AG04450 (cell line): ENCODE measurements at regions of chr16 and their contacts with region 1.

Region 1: GRCh38 chr16:30805370-30806169 is 18.6 kb upstream of the ZNF629 start:
- DNase-seq: no peak
- H3K4me3 ChIP-seq: peak overlapping the region; percentile 79
- H3K27ac ChIP-seq: peak overlapping the region; percentile 87
- H3K27me3 ChIP-seq: peaks cover 2% of the 10 kb centered on the region
- CTCF ChIP-seq: peak; percentile 11; the same call in 1 of the 2 replicates

Region 2: DNA sequence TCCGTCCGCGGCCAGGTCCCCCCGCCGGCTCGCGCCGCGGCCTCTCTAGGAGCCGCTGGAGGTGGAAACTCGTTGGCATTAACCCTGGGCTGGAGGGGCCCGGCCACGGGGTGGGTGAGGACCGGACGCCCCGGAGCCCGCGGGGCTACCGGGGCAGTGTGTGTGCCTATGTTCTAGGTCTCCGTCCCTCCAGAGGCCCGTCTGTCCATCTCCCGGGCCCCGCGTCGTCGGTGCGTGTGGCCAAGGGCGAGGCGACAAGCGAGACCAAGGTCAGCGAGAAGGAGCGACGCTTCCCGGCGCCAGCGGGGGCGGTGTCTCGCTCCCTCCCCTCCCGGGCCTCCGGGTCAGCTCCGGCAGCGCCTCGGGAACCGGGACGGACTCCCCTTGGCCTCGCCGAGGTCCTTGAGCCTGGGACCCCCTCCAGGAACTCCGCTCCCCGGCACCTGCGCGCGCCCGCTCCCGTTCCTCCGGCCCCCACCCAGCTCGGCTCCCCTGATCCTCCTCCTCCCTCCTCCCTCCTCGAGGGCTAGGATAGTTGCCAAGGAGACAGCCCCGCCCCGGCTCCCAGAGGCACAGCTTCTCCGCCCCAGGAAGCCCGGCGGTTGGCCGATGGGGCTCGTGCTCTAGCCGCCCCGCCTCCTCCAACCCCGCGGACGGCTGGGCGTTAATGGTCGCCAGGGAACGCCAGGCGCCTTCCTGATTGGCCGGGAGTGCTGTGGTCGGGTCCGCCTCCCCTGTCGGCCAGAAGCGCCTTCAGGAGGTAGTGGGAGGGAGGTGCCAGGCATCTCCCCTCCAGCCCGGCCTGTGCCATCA is 278.5 kb before region 1 on chr16:
- CTCF ChIA-PET with region 1: no interaction called
- POLR2A ChIA-PET with region 1: no interaction called
- DNase-seq: peak; percentile 91
- H3K4me3 ChIP-seq: peak overlapping the region; percentile 81
- H3K27ac ChIP-seq: peak overlapping the region; percentile 65
- H3K27me3 ChIP-seq: no peaks in the 10 kb centered on the region
- CTCF ChIP-seq: peak; percentile 19; the same call in 1 of the 2 replicates

Region 3: DNA sequence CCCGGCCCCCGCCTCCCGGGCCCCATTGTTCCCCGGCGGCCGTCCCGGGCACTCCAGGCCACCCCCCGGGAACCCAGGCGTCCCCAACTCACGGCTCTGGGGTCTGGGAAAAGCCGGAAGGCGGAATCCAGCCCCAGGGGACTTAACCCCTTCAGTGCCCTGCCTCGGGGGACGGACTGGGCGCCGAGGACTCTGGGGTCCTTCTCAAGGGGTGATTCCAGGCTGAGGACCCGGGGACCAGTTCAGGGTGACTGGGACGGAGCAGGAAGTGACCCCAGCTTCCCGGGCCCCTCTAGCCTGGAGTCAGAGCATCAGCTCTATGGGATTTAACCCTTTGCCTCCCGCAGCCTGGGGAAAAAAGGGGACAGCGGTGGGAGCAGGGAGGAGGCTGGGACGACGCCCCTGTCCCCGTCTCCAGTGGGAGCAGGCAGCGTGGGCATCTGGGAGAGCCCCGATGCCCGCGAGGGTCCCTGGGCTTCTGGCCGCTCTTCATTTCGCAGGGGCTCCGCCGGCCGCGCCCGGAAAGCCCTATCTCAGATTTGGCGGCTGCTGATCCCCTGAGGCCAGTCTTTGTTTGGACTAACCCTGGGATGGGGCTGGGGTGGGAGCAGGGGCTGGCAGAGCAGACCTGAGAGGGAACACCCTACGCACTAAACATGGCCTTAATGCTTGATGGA is 18.5 kb before region 1 on chr16 and contains the start of gene ZNF629:
- CTCF ChIA-PET with region 1: interaction called, 3 read pairs
- POLR2A ChIA-PET with region 1: interaction called, 70 read pairs
- DNase-seq: no peak
- H3K4me3 ChIP-seq: peak within 1 kb of the TSS; percentile 90
- H3K27ac ChIP-seq: peak within 1 kb of the TSS; percentile 73
- H3K27me3 ChIP-seq: no peaks in the 10 kb centered on the region
- CTCF ChIP-seq: no peak
- polyA plus RNA-seq, gene ZNF629: 5.1 and 8.0 TPM in 2 replicates

Region 4: GRCh38 chr16:30922960-30923535 is 117.5 kb after region 1 on chr16:
- CTCF ChIA-PET with region 1: no interaction called
- POLR2A ChIA-PET with region 1: no interaction called
- DNase-seq: peak; percentile 99
- H3K4me3 ChIP-seq: peak overlapping the region; percentile 94
- H3K27ac ChIP-seq: peak overlapping the region; percentile 97
- H3K27me3 ChIP-seq: no peaks in the 10 kb centered on the region
- CTCF ChIP-seq: no peak